ENCODE measurements at regions of chr4 and their contacts with region 1.

Region 1: GRCh38 chr4:55546756-55547465 is at the start of gene CLOCK:
- DNase-seq: peak; percentile 96
- total RNA-seq, gene CLOCK: 35.2 to 45.1 TPM

Region 2: GRCh38 chr4:54586320-54586955 is 960.5 kb before region 1 on chr4:
- intact Hi-C with region 1: no loop called
- DNase-seq: no peak

Region 3: DNA sequence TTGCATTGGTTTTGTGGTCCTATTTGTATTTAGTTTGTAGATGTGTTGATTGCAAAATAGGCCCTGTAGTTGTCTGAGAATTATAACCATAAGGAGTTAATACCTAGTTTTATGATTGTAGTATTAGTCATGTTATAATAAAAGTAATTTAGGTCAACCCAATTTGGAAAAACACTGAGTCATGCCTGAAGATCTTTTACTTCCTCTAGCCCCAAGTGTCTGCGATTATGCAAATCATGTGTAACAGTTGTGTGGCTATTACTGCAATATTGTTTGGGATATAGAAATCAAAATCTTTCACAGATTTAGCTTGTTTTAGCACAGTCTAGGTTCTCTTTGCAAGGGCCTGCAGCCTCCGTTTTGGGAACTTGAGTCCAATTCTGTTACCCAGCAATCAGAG is 188.2 kb before region 1 on chr4:
- intact Hi-C with region 1: loop called in 1 of 2 experiments (anchors 10 kb)
- DNase-seq: no peak

Region 4: DNA sequence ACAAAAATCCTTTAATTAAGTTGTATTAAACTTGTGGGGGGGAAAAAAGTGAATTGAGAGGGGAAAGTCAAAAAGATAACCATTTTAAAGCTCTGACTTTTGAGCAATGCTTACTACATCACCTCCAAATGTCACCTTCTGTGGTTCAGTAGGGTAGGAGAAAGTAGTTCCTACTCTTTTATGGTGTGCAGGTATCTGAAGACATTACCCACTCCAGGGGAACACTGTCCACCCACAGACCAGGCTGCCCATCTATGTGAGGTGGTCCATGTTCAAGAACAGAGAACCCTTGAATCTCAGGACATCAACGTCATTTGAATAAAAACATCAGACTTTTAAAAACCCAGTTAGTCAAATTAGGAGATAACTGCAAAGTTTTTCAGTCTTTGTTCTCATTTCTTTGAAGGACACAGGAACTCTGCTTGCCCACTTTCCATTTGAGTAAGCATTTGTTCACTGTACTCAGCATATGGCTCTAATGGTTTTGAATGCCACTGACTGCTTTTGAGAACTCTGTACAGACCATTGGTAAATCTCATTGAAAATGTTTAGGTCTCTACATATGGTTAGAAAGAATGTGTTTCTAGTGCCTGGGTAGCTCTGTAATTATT is 70.8 kb after region 1 on chr4:
- intact Hi-C with region 1: no loop called
- DNase-seq: no peak

Measured in posterior vena cava (tissue), 2 donors.